ENCODE measurements at regions of chr18 and their contacts with region 1.

Region 1: DNA sequence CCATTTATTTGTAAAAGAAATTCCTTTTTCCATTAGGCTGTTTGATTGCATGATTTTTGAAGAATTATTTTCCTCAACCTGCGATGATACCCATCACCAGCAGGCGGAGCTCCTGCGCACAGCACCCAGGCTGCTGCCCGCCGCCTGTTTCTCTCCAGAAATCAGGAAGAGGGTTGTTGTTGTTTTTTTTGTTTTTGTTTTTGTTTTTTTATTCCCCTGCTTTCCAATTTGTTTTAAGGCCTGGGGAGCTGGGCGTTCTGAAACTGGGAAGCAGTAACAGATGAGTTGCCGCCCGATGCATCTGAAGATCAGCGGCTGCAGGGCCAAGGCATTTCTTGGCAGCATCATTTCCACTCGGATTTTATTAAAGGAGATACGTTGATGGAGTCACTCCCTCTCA is 132.1 kb downstream of the MBP start:
- DNase-seq: peak; percentile 42
- ATAC-seq: peak; percentile 52
- H3K4me3 ChIP-seq: no peak overlapping the region
- H3K27ac ChIP-seq: no peak overlapping the region
- H3K4me1 ChIP-seq: peaks cover 8% of the 10 kb centered on the region; the same call in 1 of the 2 replicates
- H3K27me3 ChIP-seq: no peaks in the 10 kb centered on the region
- CTCF ChIP-seq: no peak

Region 2: DNA sequence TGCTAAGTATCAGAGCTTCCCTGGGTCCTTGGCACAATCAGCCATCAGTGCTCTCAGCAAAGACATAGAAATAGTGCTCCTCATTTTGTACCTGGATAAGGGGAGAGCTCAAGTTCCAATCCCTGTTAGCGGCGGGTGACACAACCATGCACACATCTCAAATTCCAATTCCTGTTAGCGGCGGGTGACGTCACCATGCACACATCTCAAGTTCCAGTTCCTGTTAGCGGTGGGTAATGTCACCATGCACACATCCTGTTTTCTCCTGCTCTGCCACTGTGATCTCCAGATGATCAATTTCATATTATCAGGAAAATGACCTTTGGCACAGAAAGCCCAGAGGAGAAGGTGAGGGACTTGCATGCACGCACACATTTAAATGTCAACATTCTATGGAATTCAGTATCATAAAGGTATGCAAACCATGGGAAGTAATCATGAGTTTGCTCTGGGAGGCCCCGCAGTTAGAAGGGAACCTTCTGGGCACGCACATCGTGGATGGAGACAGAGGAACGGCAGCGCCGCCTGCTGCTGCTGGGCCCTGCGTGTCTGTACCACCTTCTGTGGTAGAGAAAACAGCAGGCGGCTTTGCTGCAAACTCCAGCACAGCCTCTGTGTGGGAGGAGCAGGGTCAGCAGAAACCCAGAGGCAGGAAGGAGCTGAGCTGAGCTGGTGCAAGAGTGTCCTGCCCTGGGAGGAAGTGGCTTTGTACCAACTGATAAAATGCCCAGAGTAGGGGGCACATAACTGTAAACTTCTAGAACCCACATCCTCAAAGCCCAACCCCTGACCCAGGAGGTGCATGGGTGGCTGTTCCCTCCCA is 54.3 kb after region 1 on chr18:
- CTCF ChIA-PET with region 1: interaction called, 6 read pairs
- POLR2A ChIA-PET with region 1: no interaction called
- in situ Hi-C with region 1: no loop called
- intact Hi-C with region 1: loop called (anchors 1 kb)
- DNase-seq: peak; percentile 95
- ATAC-seq: peak; percentile 92
- H3K4me3 ChIP-seq: peak overlapping the region in 1 of 2 experiments; percentile 34; a peak in 2 of 4 replicates
- H3K27ac ChIP-seq: peak overlapping the region; percentile 90
- H3K4me1 ChIP-seq: peaks cover 55% of the 10 kb centered on the region
- H3K27me3 ChIP-seq: no peaks in the 10 kb centered on the region
- CTCF ChIP-seq: no peak

Region 3: GRCh38 chr18:77262470-77263142 is 262.1 kb after region 1 on chr18:
- CTCF ChIA-PET with region 1: no interaction called
- POLR2A ChIA-PET with region 1: no interaction called
- in situ Hi-C with region 1: no loop called
- intact Hi-C with region 1: no loop called
- DNase-seq: no peak
- ATAC-seq: peak; percentile 94
- H3K4me3 ChIP-seq: no peak overlapping the region
- H3K27ac ChIP-seq: peak overlapping the region; percentile 45
- H3K4me1 ChIP-seq: peaks cover 15% of the 10 kb centered on the region; the same call in 1 of the 2 replicates
- H3K27me3 ChIP-seq: no peaks in the 10 kb centered on the region
- CTCF ChIP-seq: no peak

Region 4: DNA sequence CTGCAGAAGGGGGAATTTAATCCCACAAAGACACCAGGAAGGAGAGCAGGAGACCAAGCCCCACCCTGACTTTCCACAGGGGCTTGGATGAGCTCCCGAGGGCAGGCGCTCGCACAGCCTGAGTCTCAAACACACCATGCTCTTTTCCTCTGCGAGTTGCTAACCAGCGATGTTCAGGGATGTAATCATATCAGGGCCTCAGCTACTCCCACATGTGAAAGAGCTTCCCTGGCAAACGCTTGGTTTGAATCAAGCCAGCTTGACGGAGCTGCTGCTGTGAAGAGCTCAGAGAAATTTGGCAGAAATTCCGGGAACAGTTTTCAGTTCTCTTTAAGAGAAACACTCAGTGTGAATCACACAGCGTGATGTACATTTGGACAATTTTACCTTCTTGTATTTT is 634.9 kb after region 1 on chr18:
- CTCF ChIA-PET with region 1: no interaction called
- POLR2A ChIA-PET with region 1: no interaction called
- in situ Hi-C with region 1: no loop called
- intact Hi-C with region 1: no loop called
- DNase-seq: no peak
- ATAC-seq: no peak
- H3K4me3 ChIP-seq: no peak overlapping the region
- H3K27ac ChIP-seq: no peak overlapping the region
- H3K4me1 ChIP-seq: no peaks in the 10 kb centered on the region
- H3K27me3 ChIP-seq: peaks cover 12% of the 10 kb centered on the region
- CTCF ChIP-seq: no peak

Region 5: DNA sequence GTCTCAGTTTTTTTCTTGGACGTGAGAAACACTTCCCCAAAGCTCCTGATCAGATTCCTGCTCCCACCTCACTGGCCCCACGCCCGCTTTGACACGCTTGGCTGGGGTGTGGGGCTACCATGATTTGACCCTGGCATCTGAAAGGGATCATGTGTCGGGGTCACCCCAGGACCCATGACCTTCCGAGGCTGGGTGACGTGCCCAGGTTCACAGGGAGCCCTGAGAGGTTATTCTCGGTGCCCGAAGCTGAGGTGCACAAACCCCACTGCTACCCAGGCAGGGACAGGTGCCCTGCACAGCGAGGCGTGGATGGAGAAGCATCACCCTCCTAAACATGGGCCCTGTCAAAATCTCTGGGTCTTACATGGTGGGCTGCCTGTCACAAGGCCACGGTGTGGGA is 653.3 kb after region 1 on chr18:
- CTCF ChIA-PET with region 1: no interaction called
- POLR2A ChIA-PET with region 1: no interaction called
- in situ Hi-C with region 1: no loop called
- intact Hi-C with region 1: loop called (anchors 2 kb)
- DNase-seq: no peak
- ATAC-seq: no peak
- H3K4me3 ChIP-seq: no peak overlapping the region
- H3K27ac ChIP-seq: no peak overlapping the region
- H3K4me1 ChIP-seq: peaks cover 5% of the 10 kb centered on the region
- H3K27me3 ChIP-seq: peaks cover 4% of the 10 kb centered on the region
- CTCF ChIP-seq: no peak

Measured in Panc1 (cell line).